Left ventricle myocardium inferior (tissue), 1 donor: ENCODE measurements at regions of chr20 and their contacts with region 1.

Region 1: DNA sequence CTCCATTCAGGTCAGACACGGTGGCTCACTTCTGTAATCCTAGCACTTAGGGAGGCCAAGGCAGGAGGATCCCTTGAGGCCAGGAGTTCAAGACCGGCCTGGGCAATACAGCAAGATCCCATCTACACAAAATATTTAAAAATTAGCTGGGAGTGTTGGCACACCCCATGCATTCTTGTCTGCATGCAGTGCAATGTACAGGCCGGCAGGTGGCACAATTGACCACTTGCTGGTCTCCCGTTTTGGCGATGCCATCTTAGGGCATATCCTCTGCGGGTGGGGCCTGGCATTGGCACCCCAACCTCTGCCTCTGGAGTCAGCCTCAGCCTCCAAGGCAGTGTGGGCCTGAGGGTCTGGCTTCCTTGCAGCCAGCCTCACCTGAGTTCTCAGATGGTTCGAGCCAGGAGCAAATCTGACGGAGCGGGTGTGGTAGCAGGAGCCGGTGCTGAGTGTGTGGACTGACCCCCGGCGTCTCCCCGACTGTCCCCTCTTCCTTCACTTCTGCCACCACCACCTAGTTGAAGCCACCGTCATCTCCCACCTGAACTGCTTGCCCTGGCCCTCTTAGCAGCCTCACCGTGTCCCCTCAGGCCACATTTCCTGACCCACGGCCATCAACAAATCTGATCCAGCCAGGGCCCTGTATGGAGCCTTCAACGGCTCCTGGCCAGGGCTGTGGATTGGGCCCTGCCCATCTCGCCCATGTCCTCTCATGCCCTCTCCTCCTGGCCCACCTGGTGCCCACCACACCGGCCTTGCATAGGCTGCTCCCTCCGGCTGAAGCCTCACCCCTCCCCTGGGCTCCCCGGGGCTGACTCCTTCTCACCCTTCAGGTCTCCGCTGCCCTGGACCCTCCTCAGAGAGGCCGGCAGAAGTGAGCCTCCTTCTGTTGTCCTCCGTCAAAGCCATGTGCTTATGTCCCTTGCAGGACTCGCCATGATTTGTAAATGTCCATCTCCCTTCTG is 44.0 kb downstream of the EFCAB8 start:
- DNase-seq: peak; percentile 32
- H3K4me3 ChIP-seq: no peak overlapping the region
- H3K27ac ChIP-seq: no peak overlapping the region
- H3K4me1 ChIP-seq: peaks cover under 1% of the 10 kb centered on the region
- H3K27me3 ChIP-seq: no peaks in the 10 kb centered on the region
- CTCF ChIP-seq: peak; percentile 94

Region 2: DNA sequence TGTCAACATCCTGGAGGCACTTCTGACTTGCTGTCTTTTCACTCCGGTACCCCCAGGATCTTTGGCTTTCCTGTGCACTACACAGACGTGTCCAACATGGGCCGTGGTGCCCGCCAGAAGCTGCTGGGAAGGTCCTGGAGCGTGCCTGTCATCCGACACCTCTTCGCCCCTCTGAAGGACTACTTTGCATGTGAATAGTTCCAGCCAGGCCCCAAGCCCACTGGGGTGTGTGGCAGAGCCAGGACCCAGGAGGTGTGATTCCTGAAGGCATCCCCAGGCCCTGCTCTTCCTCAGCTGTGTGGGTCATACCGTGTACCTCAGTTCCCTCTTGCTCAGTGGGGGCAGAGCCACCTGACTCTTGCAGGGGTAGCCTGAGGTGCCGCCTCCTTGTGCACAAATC is 95.0 kb before region 1 on chr20:
- intact Hi-C with region 1: no loop called
- DNase-seq: no peak
- H3K4me3 ChIP-seq: no peak overlapping the region
- H3K27ac ChIP-seq: no peak overlapping the region
- H3K4me1 ChIP-seq: no peaks in the 10 kb centered on the region
- H3K27me3 ChIP-seq: no peaks in the 10 kb centered on the region
- CTCF ChIP-seq: no peak

Region 3: GRCh38 chr20:33217052-33217451 is 314.3 kb after region 1 on chr20 and contains the start of gene BPIFA3:
- intact Hi-C with region 1: loop called (anchors 5 kb)
- DNase-seq: no peak
- H3K4me3 ChIP-seq: no peak within 1 kb of the TSS
- H3K27ac ChIP-seq: no peak within 1 kb of the TSS
- H3K4me1 ChIP-seq: no peaks in the 10 kb centered on the region
- H3K27me3 ChIP-seq: peaks cover 91% of the 10 kb centered on the region
- CTCF ChIP-seq: no peak
- total RNA-seq, gene BPIFA3: not detected

Region 4: DNA sequence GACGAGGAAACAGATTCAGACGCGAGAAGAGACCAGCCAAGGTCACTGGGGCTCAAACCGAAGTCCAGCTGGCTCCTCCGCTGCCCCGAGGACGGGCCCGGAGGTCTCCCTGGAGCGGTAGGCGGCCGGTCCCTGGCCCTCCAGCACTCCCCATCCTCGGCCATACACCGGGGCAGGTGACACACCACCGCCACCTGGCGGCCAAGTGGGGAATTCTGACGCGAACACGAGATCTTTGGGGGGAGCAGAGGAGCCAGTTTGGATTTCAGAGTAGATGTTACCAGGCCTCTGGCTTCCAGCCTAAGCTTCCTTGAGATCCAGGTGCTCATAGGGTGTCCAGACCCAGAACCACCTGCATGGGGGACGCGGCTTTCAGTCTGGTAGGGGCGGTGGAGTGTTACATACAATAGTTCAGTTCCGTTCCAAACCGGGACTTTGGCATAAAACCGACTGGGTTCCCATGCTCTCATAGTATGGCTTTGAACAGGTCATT is 396.4 kb after region 1 on chr20:
- intact Hi-C with region 1: loop called (anchors 5 kb)
- DNase-seq: peak; percentile 52
- H3K4me3 ChIP-seq: no peak overlapping the region
- H3K27ac ChIP-seq: no peak overlapping the region
- H3K4me1 ChIP-seq: peaks cover 4% of the 10 kb centered on the region
- H3K27me3 ChIP-seq: peaks cover 66% of the 10 kb centered on the region
- CTCF ChIP-seq: peak; percentile 93